ENCODE measurements at regions of chr10 and their contacts with region 1.

Region 1: DNA sequence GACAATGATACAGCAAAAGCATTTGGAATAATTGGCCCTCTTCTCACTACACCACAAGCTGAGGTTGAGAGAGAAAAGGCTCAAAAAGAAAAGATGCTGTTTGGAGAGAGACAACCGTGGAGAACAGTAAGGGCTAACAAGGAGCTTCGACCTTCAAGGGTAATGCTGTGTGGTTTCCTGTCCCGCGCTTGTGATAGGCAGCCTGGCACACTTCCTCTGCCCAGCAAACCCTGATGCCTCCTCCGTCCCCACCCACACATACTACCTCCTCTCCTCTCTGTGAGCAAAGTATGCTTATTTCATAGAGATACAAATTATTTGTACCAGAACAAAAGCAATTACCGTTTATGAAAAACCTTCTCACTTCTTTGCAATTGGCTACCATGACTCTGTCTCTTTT is 755.4 kb downstream of the KCNMA1 start:
- DNase-seq: no peak
- ATAC-seq: no peak
- H3K4me3 ChIP-seq: no peak overlapping the region
- H3K27ac ChIP-seq: no peak overlapping the region
- H3K4me1 ChIP-seq: no peaks in the 10 kb centered on the region
- H3K27me3 ChIP-seq: peaks cover 15% of the 10 kb centered on the region; the same call in 1 of the 2 replicates
- CTCF ChIP-seq: no peak

Region 2: GRCh38 chr10:76939933-76940468 is 57.8 kb after region 1 on chr10:
- CTCF ChIA-PET with region 1: no interaction called
- POLR2A ChIA-PET with region 1: no interaction called
- intact Hi-C with region 1: loop called (anchors 5 kb)
- DNase-seq: no peak
- ATAC-seq: peak; percentile 56
- H3K4me3 ChIP-seq: no peak overlapping the region
- H3K27ac ChIP-seq: no peak overlapping the region
- H3K4me1 ChIP-seq: no peaks in the 10 kb centered on the region
- H3K27me3 ChIP-seq: 0 out of 2 replicates have a peak, but pooled peaks cover 2% of the 10 kb centered on the region
- CTCF ChIP-seq: no peak

Region 3: GRCh38 chr10:76950354-76950753 is 68.1 kb after region 1 on chr10:
- CTCF ChIA-PET with region 1: no interaction called
- POLR2A ChIA-PET with region 1: no interaction called
- intact Hi-C with region 1: no loop called
- DNase-seq: no peak
- ATAC-seq: no peak
- H3K4me3 ChIP-seq: no peak overlapping the region
- H3K27ac ChIP-seq: no peak overlapping the region
- H3K4me1 ChIP-seq: peaks cover 12% of the 10 kb centered on the region
- H3K27me3 ChIP-seq: no peaks in the 10 kb centered on the region
- CTCF ChIP-seq: no peak